ENCODE measurements at regions of chr5 and their contacts with region 1.

Region 1: DNA sequence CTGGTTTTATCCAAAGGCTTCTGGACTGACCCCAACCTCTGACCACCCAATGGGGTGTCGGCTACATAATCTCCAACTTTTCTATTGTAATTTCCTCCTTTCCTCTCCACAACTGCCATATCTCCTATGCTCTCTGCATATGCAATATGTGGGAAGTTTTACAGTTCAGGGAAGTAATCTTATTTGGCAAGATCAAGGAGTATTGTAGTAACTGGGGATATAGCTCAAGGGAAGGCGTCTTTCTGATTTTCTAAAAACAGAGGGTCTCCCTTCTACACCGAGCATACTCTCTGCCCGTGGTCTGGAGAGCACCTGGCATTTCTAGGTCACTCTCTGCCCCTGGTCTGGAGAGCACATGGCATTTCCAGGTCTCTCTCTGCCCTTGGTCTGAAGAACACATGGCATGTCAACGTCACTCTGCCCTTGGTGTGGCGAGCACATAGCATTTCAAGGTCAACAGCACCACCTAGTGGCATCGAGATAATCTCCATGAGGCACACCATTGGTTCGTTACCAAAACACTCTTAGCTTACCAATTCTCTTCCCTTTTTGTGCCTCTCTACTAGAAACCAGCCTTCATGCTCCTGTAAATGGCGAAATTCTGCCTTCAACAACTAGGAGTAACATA is 616.4 kb upstream of the NUDT12 start:
- DNase-seq: no peak
- H3K4me3 ChIP-seq: no peak overlapping the region
- H3K27ac ChIP-seq: no peak overlapping the region
- H3K4me1 ChIP-seq: no peaks in the 10 kb centered on the region
- H3K27me3 ChIP-seq: no peaks in the 10 kb centered on the region
- CTCF ChIP-seq: peak; percentile 37

Region 2: GRCh38 chr5:103582364-103582763 is 596.6 kb before region 1 on chr5:
- intact Hi-C with region 1: loop called (anchors 5 kb)
- DNase-seq: no peak
- H3K4me3 ChIP-seq: no peak overlapping the region
- H3K27ac ChIP-seq: no peak overlapping the region
- H3K4me1 ChIP-seq: no peaks in the 10 kb centered on the region
- H3K27me3 ChIP-seq: no peaks in the 10 kb centered on the region
- CTCF ChIP-seq: peak; percentile 64

Measured in left ventricle myocardium inferior (tissue), 1 donor.